Ascending aorta (tissue), 2 donors: ENCODE measurements at regions of chr17 and their contacts with region 1.

Region 1: GRCh38 chr17:17859909-17860765 is 23.4 kb upstream of the SREBF1 start:
- DNase-seq: no peak
- H3K4me3 ChIP-seq: no peak overlapping the region
- H3K27ac ChIP-seq: no peak overlapping the region
- H3K4me1 ChIP-seq: peaks cover 8 to 13% of the 10 kb centered on the region in 2 donors
- H3K27me3 ChIP-seq: no peaks in the 10 kb centered on the region
- CTCF ChIP-seq: peak; percentile 96

Region 2: DNA sequence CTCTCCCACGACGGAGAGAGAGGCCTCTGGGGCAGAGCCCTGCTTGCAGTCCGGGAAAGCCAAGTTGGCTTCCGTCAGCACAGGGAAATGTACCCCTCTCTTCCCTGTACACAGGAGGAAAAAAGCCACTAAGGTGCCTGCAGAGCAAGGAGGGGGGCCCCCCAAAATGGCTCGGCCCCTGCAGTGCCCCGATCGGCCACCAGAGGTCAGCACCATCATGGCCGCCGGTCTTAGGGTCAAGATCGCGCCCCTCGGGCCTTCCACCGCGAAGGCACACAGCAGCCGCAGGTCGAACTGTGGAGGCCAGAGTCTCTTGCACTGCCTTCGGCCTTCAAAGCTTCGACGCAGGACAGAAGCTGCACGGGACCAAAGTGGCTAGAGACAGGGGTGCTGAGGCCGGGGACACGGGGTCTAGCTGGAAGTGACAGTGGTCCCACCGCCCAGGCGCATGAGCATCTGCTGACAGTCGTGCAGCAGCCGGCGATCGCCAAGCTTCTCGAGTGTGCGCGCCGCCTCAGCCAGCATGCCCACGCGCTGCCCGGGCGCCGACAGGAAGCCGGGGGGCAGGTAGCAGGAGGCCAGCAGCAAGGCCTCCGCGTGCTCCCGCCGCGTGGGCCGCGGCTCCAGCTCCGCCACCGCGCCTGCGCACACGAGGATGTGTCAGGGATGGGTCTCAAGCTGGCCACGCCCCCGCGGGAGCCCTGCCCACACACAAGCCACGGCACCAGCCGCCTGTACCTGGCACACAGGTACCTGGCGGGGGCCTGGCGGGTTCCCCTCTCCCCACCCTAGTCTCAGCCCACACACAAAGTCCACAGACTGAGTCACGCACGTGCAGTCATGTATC is 47.7 kb before region 1 on chr17:
- intact Hi-C with region 1: loop called (anchors 1 kb)
- DNase-seq: peak in 1 of 2 donors; percentile 85
- H3K4me3 ChIP-seq: no peak overlapping the region
- H3K27ac ChIP-seq: no peak overlapping the region
- H3K4me1 ChIP-seq: peaks cover 0 to 2% of the 10 kb centered on the region in 2 donors
- H3K27me3 ChIP-seq: no peaks in the 10 kb centered on the region
- CTCF ChIP-seq: peak; percentile 97 to 100 (median 100)

Region 3: GRCh38 chr17:17836250-17836817 is 23.8 kb before region 1 on chr17:
- intact Hi-C with region 1: loop called (anchors 2 kb)
- DNase-seq: peak; percentile 90 to 98
- H3K4me3 ChIP-seq: peak overlapping the region; percentile 62 to 73
- H3K27ac ChIP-seq: peak overlapping the region; percentile 93 to 98
- H3K4me1 ChIP-seq: peaks cover 19 to 52% of the 10 kb centered on the region in 2 donors
- H3K27me3 ChIP-seq: no peaks in the 10 kb centered on the region
- CTCF ChIP-seq: no peak

Region 4: GRCh38 chr17:17919169-17920107 is 59.3 kb after region 1 on chr17:
- intact Hi-C with region 1: loop called (anchors 5 kb)
- DNase-seq: peak in 1 of 2 donors; percentile 83
- H3K4me3 ChIP-seq: no peak overlapping the region
- H3K27ac ChIP-seq: no peak overlapping the region
- H3K4me1 ChIP-seq: peaks cover 3 to 16% of the 10 kb centered on the region in 2 donors
- H3K27me3 ChIP-seq: no peaks in the 10 kb centered on the region
- CTCF ChIP-seq: peak; percentile 68 to 81 (median 69)